ENCODE measurements at regions of chr1 and their contacts with region 1.

Region 1: DNA sequence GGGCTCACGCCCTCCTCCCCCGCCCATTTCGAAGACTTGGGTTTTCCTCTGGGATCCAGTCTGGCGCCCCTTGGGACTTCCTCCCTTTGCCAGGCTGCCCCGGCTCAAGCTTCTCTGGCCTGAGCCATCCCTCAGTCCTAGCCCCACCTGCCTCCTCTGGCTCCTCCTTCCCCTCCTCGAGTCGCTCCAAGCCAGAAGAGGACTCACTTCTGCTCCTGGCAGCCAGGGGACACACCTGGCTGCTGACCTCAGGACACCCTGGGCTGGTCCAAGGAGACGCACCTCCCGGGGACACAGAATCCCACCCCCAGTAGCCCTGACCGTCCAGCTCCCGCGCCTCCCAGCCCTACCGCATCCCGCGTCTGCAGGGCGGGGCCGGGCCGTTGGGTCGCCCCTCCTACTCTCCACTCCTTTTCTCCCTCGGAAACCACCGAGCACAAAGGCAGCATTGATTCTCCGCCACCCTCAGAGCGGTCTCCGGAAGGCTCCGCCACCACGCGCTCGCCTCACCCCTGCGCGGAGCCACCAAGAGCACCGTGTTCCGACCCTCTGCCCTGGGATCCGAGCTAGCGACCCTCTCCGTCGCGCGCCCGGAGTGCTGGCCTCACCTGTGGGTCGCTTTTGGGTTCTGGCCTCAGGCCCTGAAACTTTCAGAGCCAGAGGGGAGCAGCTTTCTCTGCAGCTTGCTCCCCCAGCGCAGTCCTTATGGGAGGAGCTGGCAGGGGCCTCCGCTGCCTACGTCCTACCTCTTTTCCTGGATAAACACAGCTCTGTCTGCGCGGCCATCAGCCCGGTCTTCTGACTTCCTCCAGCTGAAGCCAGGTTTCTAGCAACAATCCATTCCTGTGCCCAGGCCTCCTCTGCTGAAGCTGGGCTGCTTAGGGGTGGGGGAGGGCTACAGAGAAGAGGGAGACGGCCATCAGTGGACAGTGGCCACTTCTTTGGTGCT is at the start of gene C2CD4D:
- DNase-seq: no peak
- ATAC-seq: peak; percentile 90
- H3K4me3 ChIP-seq: peak within 1 kb of the TSS; percentile 57 to 73
- H3K27ac ChIP-seq: peak within 1 kb of the TSS; percentile 90
- H3K4me1 ChIP-seq: peaks cover 10% of the 10 kb centered on the region
- H3K27me3 ChIP-seq: no peaks in the 10 kb centered on the region
- CTCF ChIP-seq: no peak
- total RNA-seq, gene C2CD4D: 1.2 TPM

Region 2: DNA sequence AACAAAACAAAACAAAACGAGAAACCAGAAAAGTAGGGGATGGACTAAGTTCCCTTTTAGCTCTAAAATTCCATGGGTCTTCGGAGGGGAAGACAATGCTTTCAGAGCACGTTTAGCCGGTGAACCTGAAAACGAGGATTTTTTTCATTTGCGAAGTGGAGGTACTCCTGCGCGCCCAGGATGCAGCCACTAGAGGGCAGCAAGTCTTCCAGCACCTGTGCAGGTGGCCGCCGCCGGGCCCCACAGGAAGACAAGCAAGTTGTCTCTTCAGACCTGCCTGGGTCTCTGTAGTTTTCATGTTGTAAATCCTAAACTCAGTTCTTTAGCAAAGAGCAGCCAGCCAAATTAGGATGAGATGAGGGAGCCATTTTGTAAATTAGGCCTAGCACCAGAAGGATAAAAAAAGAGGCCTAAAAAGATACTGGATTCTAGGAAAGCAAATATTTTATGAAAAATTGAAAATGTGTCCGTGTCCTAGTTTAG is 245.5 kb before region 1 on chr1:
- CTCF ChIA-PET with region 1: no interaction called
- POLR2A ChIA-PET with region 1: no interaction called
- in situ Hi-C with region 1: no loop called
- intact Hi-C with region 1: loop called (anchors 10 kb)
- DNase-seq: no peak
- ATAC-seq: peak; percentile 84
- H3K4me3 ChIP-seq: 0 out of 4 replicates have a peak overlapping the region, but pooled peaks of 1 of the 2 experiments have one; percentile 18
- H3K27ac ChIP-seq: peak overlapping the region; percentile 52; the same call in 1 of the 2 replicates
- H3K4me1 ChIP-seq: peaks cover 17% of the 10 kb centered on the region
- H3K27me3 ChIP-seq: no peaks in the 10 kb centered on the region
- CTCF ChIP-seq: peak; percentile 98

Region 3: GRCh38 chr1:151693076-151693651 is 146.6 kb before region 1 on chr1:
- CTCF ChIA-PET with region 1: interaction called, 6 read pairs
- POLR2A ChIA-PET with region 1: no interaction called
- in situ Hi-C with region 1: no loop called
- intact Hi-C with region 1: loop called (anchors 10 kb)
- DNase-seq: peak; percentile 18
- ATAC-seq: 0 out of 2 replicates have a peak, but pooled peaks have one; percentile 65
- H3K4me3 ChIP-seq: no peak overlapping the region
- H3K27ac ChIP-seq: no peak overlapping the region
- H3K4me1 ChIP-seq: no peaks in the 10 kb centered on the region
- H3K27me3 ChIP-seq: no peaks in the 10 kb centered on the region
- CTCF ChIP-seq: peak; percentile 84

Region 4: GRCh38 chr1:151762941-151763921 is 76.5 kb before region 1 on chr1 and contains the start of gene MRPL9:
- CTCF ChIA-PET with region 1: no interaction called
- POLR2A ChIA-PET with region 1: no interaction called
- in situ Hi-C with region 1: no loop called
- intact Hi-C with region 1: loop called (anchors 2 kb)
- DNase-seq: no peak
- ATAC-seq: peak; percentile 100
- H3K4me3 ChIP-seq: peak within 1 kb of the TSS; percentile 78 to 85
- H3K27ac ChIP-seq: peak within 1 kb of the TSS; percentile 99
- H3K4me1 ChIP-seq: peaks cover 13% of the 10 kb centered on the region
- H3K27me3 ChIP-seq: no peaks in the 10 kb centered on the region
- CTCF ChIP-seq: no peak
- total RNA-seq, gene MRPL9: 98.3 TPM

Region 5: DNA sequence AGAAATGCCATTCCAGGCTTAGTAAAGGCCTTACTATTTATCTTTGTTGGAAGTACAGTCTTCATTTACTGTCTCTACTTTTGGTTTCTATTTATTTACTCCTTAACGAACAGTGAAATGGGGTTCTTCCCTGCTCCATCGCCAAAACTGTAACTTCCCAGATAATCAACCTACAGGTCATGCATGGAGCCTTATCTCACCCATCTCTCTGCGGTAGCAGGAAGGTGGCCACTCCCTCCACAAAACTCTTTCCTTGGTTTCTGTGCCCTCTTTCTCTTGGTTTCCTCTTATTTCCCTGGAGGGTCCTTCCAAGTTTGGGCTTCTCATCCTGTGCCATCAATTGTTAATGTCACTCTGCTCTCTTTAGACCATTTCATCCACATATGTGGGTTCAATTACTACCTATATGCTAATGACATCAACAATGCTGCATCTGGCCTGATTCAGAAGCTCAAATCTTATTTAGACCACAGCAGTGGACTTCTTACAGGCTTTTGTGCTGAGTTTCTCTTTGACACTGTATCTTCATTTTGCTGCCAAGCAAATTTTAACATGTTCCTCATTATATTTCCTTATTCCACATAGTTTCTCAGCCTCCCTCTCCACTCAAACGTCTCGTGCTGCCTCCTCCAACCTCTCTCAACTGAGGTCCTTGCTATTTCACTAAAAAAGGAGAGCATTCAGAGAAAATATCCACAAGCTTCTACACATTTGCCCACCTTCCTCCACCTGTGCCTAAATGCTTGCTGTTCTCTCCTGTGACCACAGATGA is 56.1 kb before region 1 on chr1:
- CTCF ChIA-PET with region 1: no interaction called
- POLR2A ChIA-PET with region 1: no interaction called
- in situ Hi-C with region 1: no loop called
- intact Hi-C with region 1: no loop called
- DNase-seq: no peak
- ATAC-seq: no peak
- H3K4me3 ChIP-seq: no peak overlapping the region
- H3K27ac ChIP-seq: no peak overlapping the region
- H3K4me1 ChIP-seq: peaks cover 6% of the 10 kb centered on the region; the same call in 1 of the 2 replicates
- H3K27me3 ChIP-seq: no peaks in the 10 kb centered on the region
- CTCF ChIP-seq: no peak

Region 6: DNA sequence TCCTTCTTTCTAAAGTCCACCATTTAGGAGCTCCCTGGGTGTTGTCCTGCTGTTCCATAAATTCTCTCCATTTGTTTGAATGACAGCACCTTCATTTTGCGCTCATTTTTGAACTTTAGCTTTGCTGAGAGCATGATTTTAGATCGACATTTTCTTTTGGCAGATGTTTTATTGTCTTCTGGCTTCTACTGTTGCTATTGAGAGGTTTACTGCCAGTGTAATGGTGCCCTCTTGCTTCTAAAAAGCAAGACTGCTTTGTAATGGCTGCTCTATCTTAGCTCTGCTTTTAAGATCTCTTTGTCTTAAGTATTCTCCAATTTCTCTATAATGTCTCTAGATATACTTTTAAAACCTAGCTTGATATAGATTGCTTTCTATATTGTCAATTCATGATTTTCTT is 41.7 kb after region 1 on chr1:
- CTCF ChIA-PET with region 1: interaction called, 3 read pairs
- POLR2A ChIA-PET with region 1: interaction called, 11 read pairs
- in situ Hi-C with region 1: no loop called
- intact Hi-C with region 1: no loop called
- DNase-seq: no peak
- ATAC-seq: no peak
- H3K4me3 ChIP-seq: no peak overlapping the region
- H3K27ac ChIP-seq: no peak overlapping the region
- H3K4me1 ChIP-seq: no peaks in the 10 kb centered on the region
- H3K27me3 ChIP-seq: no peaks in the 10 kb centered on the region
- CTCF ChIP-seq: peak; percentile 19; the same call in 1 of the 2 replicates

Region 7: GRCh38 chr1:152024158-152024557 is 184.4 kb after region 1 on chr1:
- CTCF ChIA-PET with region 1: no interaction called
- POLR2A ChIA-PET with region 1: no interaction called
- in situ Hi-C with region 1: no loop called
- intact Hi-C with region 1: no loop called
- DNase-seq: no peak
- ATAC-seq: no peak; the same call in 1 of the 2 replicates
- H3K4me3 ChIP-seq: no peak overlapping the region
- H3K27ac ChIP-seq: no peak overlapping the region
- H3K4me1 ChIP-seq: no peaks in the 10 kb centered on the region
- H3K27me3 ChIP-seq: no peaks in the 10 kb centered on the region
- CTCF ChIP-seq: no peak

Measured in Panc1 (cell line).